GM10248 (cell line): ENCODE measurements at regions of chr1 and their contacts with region 1.

Region 1: GRCh38 chr1:199243423-199244061 is 604.7 kb downstream of the PTPRC start:
- DNase-seq: peak; percentile 76
- CTCF ChIP-seq: peak; percentile 91

Region 2: DNA sequence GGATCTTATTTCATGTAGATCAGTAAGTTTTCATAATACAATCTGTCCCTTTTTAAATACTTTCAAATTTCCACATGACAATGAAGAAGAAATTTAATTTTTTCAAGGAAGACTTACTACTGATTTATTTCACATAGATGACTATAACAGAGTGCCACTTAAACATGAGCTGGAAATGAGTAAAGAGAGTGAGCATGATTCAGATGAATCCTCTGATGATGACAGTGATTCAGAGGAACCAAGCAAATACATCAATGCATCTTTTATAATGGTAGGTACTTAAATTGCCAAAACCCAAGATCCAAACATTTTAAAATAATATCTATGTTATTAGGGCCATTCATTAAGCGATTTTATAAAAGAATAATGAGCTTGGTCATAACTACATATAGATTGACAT is 494.3 kb before region 1 on chr1:
- CTCF ChIA-PET with region 1: interaction called, 12 read pairs
- POLR2A ChIA-PET with region 1: no interaction called
- DNase-seq: no peak
- CTCF ChIP-seq: no peak

Region 3: DNA sequence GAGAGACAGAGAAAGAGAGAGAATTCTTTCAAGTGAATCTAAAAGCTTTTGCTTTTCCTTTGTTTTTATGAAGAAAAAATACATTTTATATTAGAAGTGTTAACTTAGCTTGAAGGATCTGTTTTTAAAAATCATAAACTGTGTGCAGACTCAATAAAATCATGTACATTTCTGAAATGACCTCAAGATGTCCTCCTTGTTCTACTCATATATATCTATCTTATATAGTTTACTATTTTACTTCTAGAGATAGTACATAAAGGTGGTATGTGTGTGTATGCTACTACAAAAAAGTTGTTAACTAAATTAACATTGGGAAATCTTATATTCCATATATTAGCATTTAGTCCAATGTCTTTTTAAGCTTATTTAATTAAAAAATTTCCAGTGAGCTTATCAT is 487.1 kb before region 1 on chr1:
- CTCF ChIA-PET with region 1: interaction called, 43 read pairs
- POLR2A ChIA-PET with region 1: no interaction called
- DNase-seq: no peak
- CTCF ChIP-seq: no peak

Region 4: DNA sequence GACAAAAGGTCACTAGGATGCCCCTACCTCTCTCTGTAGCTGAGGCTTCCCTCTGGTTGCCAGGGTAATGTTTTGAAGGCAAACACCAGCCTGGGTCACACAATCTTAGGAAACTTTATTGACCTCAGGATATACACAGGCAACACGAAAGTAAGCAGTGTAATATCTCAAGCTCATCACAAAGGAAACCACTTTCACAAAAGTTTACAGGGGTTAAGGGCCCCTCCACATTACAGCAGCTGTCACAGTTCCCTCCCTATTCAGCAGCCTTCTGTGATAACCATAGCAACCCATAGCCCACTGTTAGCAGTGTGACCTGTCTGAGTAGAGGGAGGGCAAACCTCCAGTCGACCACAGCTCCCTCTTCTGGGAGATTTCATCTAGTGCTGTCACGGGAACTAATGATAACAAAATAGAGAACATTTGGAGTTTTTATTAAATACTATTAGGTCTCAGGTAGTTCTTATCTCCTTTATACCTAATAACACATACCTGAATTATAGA is 454.9 kb before region 1 on chr1:
- CTCF ChIA-PET with region 1: interaction called, 11 read pairs
- POLR2A ChIA-PET with region 1: no interaction called
- DNase-seq: peak; percentile 21
- CTCF ChIP-seq: peak; percentile 30

Region 5: GRCh38 chr1:199184180-199184579 is 59.4 kb before region 1 on chr1:
- CTCF ChIA-PET with region 1: interaction called, 11 read pairs
- POLR2A ChIA-PET with region 1: no interaction called
- DNase-seq: no peak
- CTCF ChIP-seq: no peak

Region 6: GRCh38 chr1:199226163-199226562 is 17.4 kb before region 1 on chr1:
- CTCF ChIA-PET with region 1: interaction called, 29 read pairs
- POLR2A ChIA-PET with region 1: no interaction called
- DNase-seq: no peak
- CTCF ChIP-seq: no peak

Region 7: GRCh38 chr1:199269241-199269640 is 25.7 kb after region 1 on chr1:
- CTCF ChIA-PET with region 1: interaction called, 13 read pairs
- POLR2A ChIA-PET with region 1: no interaction called
- DNase-seq: no peak
- CTCF ChIP-seq: no peak

Region 8: GRCh38 chr1:199336745-199337640 is 93.5 kb after region 1 on chr1:
- CTCF ChIA-PET with region 1: no interaction called
- POLR2A ChIA-PET with region 1: no interaction called
- DNase-seq: no peak
- CTCF ChIP-seq: no peak

Region 9: GRCh38 chr1:199399996-199400724 is 156.6 kb after region 1 on chr1:
- CTCF ChIA-PET with region 1: no interaction called
- POLR2A ChIA-PET with region 1: no interaction called
- DNase-seq: peak; percentile 11
- CTCF ChIP-seq: no peak